ENCODE measurements at regions of chr1 and their contacts with region 1.

Region 1: DNA sequence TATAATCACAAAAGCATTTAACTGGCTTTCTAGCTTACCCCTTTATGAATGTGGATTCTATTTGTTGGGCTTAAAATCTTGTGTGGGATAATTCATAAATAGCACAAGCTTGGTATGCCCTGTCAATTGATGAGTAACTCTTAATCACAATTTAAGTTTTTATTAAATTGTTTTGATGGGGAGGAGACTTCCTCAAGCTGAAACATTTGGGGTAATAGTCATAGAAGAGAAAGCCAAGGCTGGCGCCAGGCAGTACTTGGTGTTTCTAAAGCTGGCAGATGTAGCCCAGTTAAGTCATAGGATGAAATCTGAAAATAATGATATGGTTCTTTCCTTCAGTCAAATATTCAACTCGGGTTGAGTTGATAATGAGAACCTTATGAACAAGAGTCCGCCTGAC is 167.2 kb downstream of the FMN2 start:
- DNase-seq: no peak

Region 2: GRCh38 chr1:240207073-240207709 is 51.7 kb before region 1 on chr1:
- intact Hi-C with region 1: loop called in 1 of 2 experiments (anchors 2 kb)
- DNase-seq: no peak

Region 3: DNA sequence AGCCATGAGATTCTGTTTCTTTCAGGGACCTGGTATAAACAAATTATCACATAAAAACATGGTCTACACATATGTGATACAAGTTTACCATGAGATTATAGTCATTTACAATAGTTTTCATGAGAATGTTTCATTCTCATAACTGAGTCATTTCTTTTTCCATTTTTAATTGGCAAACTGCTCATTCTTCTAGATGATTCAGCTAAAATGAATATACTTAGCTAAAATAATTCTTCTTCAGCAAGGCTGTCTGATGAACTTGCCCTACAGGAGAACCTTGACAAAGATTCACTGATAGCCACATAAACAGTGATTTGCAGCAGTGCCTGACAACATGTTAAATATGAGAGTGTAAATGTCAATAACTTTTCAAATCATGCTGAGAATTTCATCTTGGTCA is 86.0 kb after region 1 on chr1:
- intact Hi-C with region 1: no loop called
- DNase-seq: no peak

Measured in posterior vena cava (tissue), 2 donors.